ENCODE measurements at regions of chr7 and their contacts with region 1.

Region 1: DNA sequence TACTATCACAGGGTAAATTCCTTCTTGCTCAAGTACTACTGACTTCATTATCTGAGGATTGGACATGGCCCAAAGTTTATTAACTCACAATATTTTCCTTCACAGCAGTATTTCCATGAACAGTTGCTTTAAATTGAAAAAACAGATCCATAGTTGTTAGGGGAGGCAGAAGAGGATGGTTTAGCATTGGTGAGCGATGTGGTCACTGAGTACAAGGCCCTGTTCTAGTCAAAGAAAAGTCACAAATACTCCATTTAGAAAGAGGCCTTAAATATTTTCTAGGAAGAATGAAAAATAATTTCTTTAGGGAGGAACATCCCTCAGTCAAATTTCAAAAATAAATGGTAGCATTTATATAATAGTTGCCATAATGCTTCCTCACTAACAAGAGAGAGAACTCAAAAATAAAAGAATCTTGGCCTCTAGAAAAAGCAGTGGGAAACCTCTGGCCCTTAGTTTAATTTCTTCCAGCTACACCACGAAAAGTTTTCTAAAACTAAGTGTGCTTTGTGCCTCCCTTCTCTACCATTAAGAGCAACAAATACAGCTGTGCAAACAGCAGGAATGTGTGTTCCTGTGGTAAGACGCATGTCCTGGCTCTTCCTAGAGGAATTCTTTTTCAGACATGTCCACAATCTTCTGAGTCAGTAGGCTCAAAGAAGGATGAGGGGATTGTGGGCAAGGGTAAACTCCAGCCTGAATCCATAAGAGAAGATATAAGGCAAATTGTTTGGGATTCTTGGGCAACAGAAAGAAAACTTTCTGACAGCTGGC is 105.7 kb downstream of the HOXA1 start:
- DNase-seq: no peak
- H3K4me3 ChIP-seq: no peak overlapping the region
- H3K4me3 Mint-ChIP-seq: no peak overlapping the region
- H3K27ac Mint-ChIP-seq: no peak overlapping the region
- H3K4me1 ChIP-seq: peaks cover 10% of the 10 kb centered on the region; the same call in 1 of the 2 replicates
- H3K4me1 Mint-ChIP-seq: no peaks in the 10 kb centered on the region
- H3K27me3 ChIP-seq: no peaks in the 10 kb centered on the region
- H3K27me3 Mint-ChIP-seq: no peaks in the 10 kb centered on the region
- CTCF ChIP-seq: no peak

Region 2: DNA sequence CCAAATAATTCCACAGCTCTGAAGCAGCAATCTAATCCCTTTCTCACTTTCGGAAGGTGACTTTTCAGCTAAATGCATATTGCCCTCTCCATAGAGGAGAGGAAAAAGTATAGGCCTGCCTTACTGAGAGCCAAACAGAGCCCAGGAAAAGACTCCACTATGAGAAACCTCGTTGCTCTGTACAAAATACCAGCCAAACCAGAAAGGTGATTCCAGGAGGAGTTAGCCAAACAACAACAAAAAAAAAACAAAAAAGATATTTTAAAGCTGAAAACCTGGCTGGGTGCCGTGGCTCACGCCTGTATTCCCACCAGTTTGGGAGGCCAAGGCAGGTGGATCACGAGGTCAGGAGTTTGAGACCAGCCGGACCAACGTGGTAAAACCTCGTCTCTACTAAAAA is 35.2 kb after region 1 on chr7:
- CTCF ChIA-PET with region 1: no interaction called
- POLR2A ChIA-PET with region 1: no interaction called
- intact Hi-C with region 1: loop called (anchors 1 kb)
- DNase-seq: no peak
- H3K4me3 ChIP-seq: no peak overlapping the region
- H3K4me3 Mint-ChIP-seq: no peak overlapping the region
- H3K27ac Mint-ChIP-seq: no peak overlapping the region
- H3K4me1 ChIP-seq: peaks cover 8% of the 10 kb centered on the region; the same call in 1 of the 2 replicates
- H3K4me1 Mint-ChIP-seq: peaks cover 5% of the 10 kb centered on the region
- H3K27me3 ChIP-seq: no peaks in the 10 kb centered on the region
- H3K27me3 Mint-ChIP-seq: no peaks in the 10 kb centered on the region
- CTCF ChIP-seq: no peak